ENCODE measurements at regions of chr10 and their contacts with region 1.

Region 1: GRCh38 chr10:23158370-23158769 is 33.7 kb upstream of the PTF1A start:
- DNase-seq: peak in 1 of 2 experiments; percentile 58
- H3K4me3 ChIP-seq: peak overlapping the region in 2 of 4 experiments; percentile 32 to 49; a peak in 4 of 8 replicates
- H3K27ac ChIP-seq: no peak overlapping the region
- H3K4me1 ChIP-seq: peaks cover 0 to 2% (median under 1%) of the 10 kb centered on the region in 4 experiments; a peak in 3 of 7 replicates
- H3K27me3 ChIP-seq: peaks cover 0 to 8% (median 0%) of the 10 kb centered on the region in 4 experiments; a peak in 2 of 7 replicates
- CTCF ChIP-seq: peak; percentile 48 to 87 (median 81)
- EP300 ChIP-seq: no peak
- POLR2A ChIP-seq: no peak
- RAD21 ChIP-seq: peak; percentile 95 to 96

Region 2: GRCh38 chr10:23171223-23171876 is 13.0 kb after region 1 on chr10:
- CTCF ChIA-PET with region 1: interaction called, 49 read pairs
- POLR2A ChIA-PET with region 1: no interaction called
- DNase-seq: peak in 1 of 2 experiments; percentile 81
- H3K4me3 ChIP-seq: no peak overlapping the region
- H3K27ac ChIP-seq: no peak overlapping the region
- H3K4me1 ChIP-seq: peaks cover 2 to 10% (median 5%) of the 10 kb centered on the region in 4 experiments; a peak in 6 of 7 replicates
- H3K27me3 ChIP-seq: peaks cover 63 to 83% (median 80%) of the 10 kb centered on the region in 4 experiments
- CTCF ChIP-seq: no peak
- EP300 ChIP-seq: no peak
- POLR2A ChIP-seq: no peak
- RAD21 ChIP-seq: no peak

Region 3: GRCh38 chr10:23198940-23199767 is 40.8 kb after region 1 on chr10:
- CTCF ChIA-PET with region 1: interaction called, 16 read pairs
- POLR2A ChIA-PET with region 1: interaction called, 3 read pairs
- DNase-seq: peak in 1 of 2 experiments; percentile 89
- H3K4me3 ChIP-seq: peak overlapping the region; percentile 34 to 61 (median 41)
- H3K27ac ChIP-seq: no peak overlapping the region
- H3K4me1 ChIP-seq: peaks cover 3 to 27% (median 11%) of the 10 kb centered on the region in 4 experiments
- H3K27me3 ChIP-seq: peaks cover 97 to 100% (median 100%) of the 10 kb centered on the region in 4 experiments
- CTCF ChIP-seq: no peak
- EP300 ChIP-seq: no peak
- POLR2A ChIP-seq: no peak
- RAD21 ChIP-seq: no peak

Region 4: DNA sequence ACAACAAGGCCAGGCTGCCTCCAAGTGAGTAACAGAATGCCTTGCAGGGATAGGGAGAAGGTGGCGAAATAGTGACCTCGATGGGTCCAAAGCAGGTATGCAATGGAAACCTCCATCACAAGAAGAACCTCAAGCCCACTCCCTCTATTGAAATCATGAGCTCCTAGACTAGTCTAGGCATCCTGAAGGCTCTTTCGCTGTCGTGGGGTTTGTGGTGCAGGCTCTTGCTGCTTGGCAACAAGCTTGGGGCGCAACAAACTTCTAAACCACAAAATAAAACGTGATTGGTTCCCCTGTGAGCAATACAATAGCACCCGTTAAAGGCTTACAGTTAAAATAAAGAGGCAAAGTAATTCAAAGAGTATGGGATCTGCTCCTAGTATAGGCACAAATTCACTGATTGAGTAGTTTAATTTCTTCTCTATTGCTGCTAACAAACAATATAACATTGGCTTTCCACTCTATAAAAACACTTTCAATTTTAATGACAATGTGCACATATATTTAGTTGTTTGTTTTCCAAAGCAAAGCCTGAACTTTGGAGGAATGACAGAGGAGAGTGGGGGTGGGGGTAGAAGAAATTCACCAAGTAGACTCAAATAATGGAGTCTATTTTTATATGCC is 122.2 kb after region 1 on chr10:
- CTCF ChIA-PET with region 1: interaction called, 18 read pairs
- POLR2A ChIA-PET with region 1: no interaction called
- DNase-seq: peak; percentile 51 to 64
- H3K4me3 ChIP-seq: peak overlapping the region in 2 of 4 experiments; percentile 7 to 48; a peak in 4 of 8 replicates
- H3K27ac ChIP-seq: peak overlapping the region; percentile 78
- H3K4me1 ChIP-seq: peaks cover 2 to 17% (median 7%) of the 10 kb centered on the region in 4 experiments; a peak in 6 of 7 replicates
- H3K27me3 ChIP-seq: no peaks in the 10 kb centered on the region
- CTCF ChIP-seq: no peak
- EP300 ChIP-seq: peak in 1 of 2 experiments; percentile 88; a peak in 1 of 3 replicates
- POLR2A ChIP-seq: peak; percentile 46 to 55; a peak in 2 of 3 replicates
- RAD21 ChIP-seq: peak in 1 of 2 experiments; percentile 34; a peak in 1 of 4 replicates

Region 5: DNA sequence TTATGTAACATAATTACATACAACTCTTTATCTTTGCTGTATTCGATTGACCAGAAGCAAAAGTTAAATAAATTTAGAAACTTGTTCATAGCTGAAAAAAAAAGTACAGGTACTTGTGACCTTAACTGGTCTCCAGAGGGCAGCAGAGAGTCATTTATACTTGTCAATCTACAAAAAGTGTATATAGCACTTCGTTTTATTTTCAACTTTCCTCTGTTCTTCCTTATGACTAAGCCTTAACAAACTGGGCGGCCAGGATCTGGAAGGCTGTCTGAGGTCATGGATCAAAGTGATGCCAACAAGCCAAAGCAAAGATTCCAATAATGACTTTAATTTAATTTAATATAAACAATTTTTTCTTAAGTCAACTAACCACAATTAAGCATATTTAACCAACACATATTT is 156.5 kb after region 1 on chr10:
- CTCF ChIA-PET with region 1: interaction called, 27 read pairs
- POLR2A ChIA-PET with region 1: no interaction called
- DNase-seq: no peak
- H3K4me3 ChIP-seq: no peak overlapping the region
- H3K27ac ChIP-seq: no peak overlapping the region
- H3K4me1 ChIP-seq: no peaks in the 10 kb centered on the region
- H3K27me3 ChIP-seq: no peaks in the 10 kb centered on the region
- CTCF ChIP-seq: peak in 2 of 3 experiments; percentile 47 to 59; a peak in 2 of 4 replicates
- EP300 ChIP-seq: no peak
- POLR2A ChIP-seq: no peak
- RAD21 ChIP-seq: peak; percentile 71 to 72

Region 6: DNA sequence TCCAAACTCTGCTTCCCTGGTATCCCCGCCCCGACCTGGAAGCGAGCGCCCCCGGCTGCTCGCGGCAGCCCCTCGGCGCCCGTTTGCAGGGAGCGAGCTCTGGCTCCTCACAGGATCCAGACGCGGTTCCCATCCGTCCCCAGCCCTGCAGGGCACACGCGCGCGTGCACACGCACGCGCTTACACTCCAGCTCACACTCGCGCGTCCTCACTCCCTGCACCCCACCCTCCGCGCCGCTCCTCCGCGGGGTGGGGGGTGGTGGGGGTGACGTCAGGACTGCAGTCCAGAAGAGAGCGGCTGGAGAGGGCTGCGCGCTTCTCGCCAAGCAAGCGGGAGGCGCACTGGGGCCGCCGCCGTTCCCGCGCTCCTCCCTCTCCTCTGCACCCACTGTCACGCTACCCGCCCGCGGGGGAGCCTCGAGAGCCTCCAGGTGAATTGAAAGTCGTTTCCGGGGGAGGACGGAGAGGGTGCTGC is 536.1 kb after region 1 on chr10:
- CTCF ChIA-PET with region 1: interaction called, 14 read pairs
- POLR2A ChIA-PET with region 1: no interaction called
- DNase-seq: peak in 1 of 2 experiments; percentile 84
- H3K4me3 ChIP-seq: peak overlapping the region; percentile 40 to 76 (median 54)
- H3K27ac ChIP-seq: no peak overlapping the region
- H3K4me1 ChIP-seq: peaks cover 1 to 11% (median 5%) of the 10 kb centered on the region in 4 experiments; a peak in 4 of 7 replicates
- H3K27me3 ChIP-seq: peaks cover 41 to 60% (median 51%) of the 10 kb centered on the region in 4 experiments
- CTCF ChIP-seq: peak in 1 of 3 experiments; percentile 4; a peak in 1 of 4 replicates
- EP300 ChIP-seq: no peak
- POLR2A ChIP-seq: no peak
- RAD21 ChIP-seq: peak; percentile 19; a peak in 2 of 4 replicates

Measured in H1 (cell line).